Activated CD4-positive, alpha-beta T cell treated with anti-CD3 and anti-CD28 coated beads, Interleukin-2, amount 10 ng/mL, durations not matched to agents 24 days and 14 days (primary cell): ENCODE measurements at regions of chr13 and their contacts with region 1.

Region 1: GRCh38 chr13:94435604-94436226 is 43.8 kb downstream of the DCT start:
- DNase-seq: peak; percentile 63
- H3K4me3 Mint-ChIP-seq: no peak overlapping the region
- H3K27ac Mint-ChIP-seq: no peak overlapping the region
- H3K4me1 Mint-ChIP-seq: peaks cover 9% of the 10 kb centered on the region
- H3K27me3 Mint-ChIP-seq: peaks cover 6% of the 10 kb centered on the region

Region 2: GRCh38 chr13:95403828-95404522 is 968.3 kb after region 1 on chr13:
- intact Hi-C with region 1: loop called (anchors 10 kb)
- DNase-seq: peak; percentile 92
- H3K4me3 Mint-ChIP-seq: peak overlapping the region; percentile 80
- H3K27ac Mint-ChIP-seq: no peak overlapping the region
- H3K4me1 Mint-ChIP-seq: peaks cover 7% of the 10 kb centered on the region
- H3K27me3 Mint-ChIP-seq: peaks cover 7% of the 10 kb centered on the region